ENCODE measurements at regions of chr12 and their contacts with region 1.

Region 1: DNA sequence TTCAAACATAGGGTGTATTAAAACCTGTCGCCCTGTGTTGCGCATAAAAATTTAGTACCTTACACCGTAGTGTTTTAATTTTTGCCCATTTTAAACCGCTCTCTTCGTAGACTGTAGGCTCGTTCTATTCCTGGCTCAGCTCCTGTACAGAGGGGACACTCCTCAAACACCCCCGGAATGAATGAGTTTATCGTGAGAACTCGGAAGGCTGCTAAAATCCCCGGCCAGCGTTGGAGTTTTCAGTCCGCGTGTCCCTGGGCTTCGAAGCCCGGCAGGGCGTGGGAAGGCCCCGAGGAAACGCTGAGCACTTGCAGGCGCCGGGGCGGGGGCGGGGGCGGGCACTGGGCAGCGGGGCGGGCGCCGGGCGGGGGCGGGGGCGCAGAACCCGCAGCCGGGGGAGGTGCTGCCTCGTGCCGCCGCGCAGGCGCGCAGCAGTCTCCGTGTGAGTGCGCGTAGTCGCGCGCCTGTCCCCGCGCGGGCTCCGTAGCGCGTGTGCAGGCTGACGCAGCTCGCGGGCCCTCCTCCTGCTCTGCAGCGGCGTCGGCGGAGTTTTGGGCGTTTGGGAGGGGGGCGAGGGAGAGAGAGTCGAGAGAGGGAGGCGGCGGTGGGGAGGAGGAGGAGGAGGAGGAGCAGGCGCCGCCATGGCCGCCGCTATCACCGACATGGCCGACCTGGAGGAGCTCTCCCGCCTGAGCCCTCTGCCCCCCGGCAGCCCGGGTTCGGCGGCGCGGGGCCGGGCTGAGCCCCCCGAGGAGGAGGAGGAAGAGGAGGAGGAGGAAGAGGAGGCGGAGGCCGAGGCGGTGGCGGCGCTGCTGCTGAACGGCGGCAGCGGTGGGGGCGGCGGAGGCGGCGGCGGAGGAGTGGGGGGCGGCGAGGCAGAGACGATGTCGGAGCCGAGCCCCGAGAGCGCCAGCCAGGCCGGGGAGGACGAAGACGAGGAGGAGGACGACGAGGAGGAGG is at the start of gene AEBP2:
- DNase-seq: peak; percentile 89 to 96
- H3K4me3 ChIP-seq: peak within 1 kb of the TSS; percentile 74
- H3K4me1 ChIP-seq: peaks cover 31% of the 10 kb centered on the region
- H3K27me3 ChIP-seq: no peaks in the 10 kb centered on the region

Region 2: DNA sequence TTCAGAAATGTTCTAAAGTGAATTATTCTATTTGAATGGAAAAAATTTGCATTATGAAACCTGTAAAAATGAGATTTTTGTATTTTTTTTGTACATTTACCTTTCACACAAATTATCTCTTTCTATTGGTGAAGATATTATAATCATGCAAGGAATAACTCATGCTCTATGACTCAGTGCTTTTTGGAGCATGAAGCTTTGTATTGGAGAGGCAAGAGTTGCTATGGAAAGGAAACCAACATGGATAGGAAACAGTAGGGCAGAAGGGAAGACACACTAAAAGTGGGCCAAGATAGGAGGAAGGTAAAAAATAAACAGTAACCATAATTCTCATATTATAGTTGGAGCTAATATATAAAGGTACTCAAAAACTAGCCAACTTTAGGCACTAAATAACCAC is 780.5 kb before region 1 on chr12:
- in situ Hi-C with region 1: no loop called
- DNase-seq: no peak
- H3K4me3 ChIP-seq: no peak overlapping the region
- H3K4me1 ChIP-seq: no peaks in the 10 kb centered on the region
- H3K27me3 ChIP-seq: no peaks in the 10 kb centered on the region

Region 3: DNA sequence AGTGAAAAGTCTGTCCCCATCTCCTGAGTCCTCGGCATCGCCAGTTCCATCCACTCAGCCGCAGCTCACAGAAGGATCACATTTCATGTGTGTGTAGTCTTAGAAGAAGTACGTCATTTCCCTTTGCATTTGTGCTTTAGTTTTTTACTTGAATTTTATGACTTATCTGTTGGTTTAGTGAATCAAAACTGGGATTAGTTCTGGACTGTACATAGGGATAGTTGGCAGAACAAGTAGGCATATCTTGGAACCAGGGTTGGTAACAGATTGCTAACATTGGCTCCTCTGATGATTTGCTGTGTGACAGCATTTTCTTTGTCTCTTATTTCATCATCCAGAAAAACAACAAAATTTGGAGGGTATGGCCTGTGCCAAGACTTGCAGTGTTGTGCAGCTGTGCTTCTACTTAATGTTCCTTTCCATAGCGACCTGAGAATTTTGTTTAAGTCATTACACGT is 69.6 kb before region 1 on chr12:
- in situ Hi-C with region 1: loop called (anchors 10 kb)
- DNase-seq: no peak
- H3K4me3 ChIP-seq: no peak overlapping the region
- H3K4me1 ChIP-seq: peaks cover 3% of the 10 kb centered on the region
- H3K27me3 ChIP-seq: no peaks in the 10 kb centered on the region

Region 4: DNA sequence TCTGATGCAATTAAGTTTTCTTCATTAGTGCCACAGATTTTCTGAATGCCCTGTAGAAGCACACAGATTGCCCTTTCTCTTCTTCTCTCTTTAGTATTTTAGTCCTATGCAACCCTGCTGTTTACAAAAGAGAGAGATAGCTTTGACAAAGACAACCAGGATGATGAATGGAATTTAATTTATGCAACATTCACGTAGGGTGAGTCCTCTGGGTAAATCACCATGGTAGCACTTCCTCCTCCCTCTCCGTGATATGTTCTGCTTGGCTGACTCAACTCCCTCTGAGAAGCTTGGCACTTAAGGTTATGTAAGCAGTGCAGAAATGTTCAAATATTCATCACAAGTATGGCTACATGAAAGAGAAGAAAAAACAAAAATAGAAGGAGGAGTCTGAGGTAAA is 528.1 kb after region 1 on chr12:
- in situ Hi-C with region 1: no loop called
- DNase-seq: no peak
- H3K4me3 ChIP-seq: no peak overlapping the region
- H3K4me1 ChIP-seq: no peaks in the 10 kb centered on the region
- H3K27me3 ChIP-seq: peaks cover 4% of the 10 kb centered on the region; the same call in 1 of the 2 replicates